Uterus (tissue), 4 donors: ENCODE measurements at regions of chr2 and their contacts with region 1.

Region 1: GRCh38 chr2:24971536-24972314 is at the start of gene DNAJC27:
- DNase-seq: peak; percentile 97 to 99
- H3K4me3 ChIP-seq: peak within 1 kb of the TSS; percentile 57 to 98
- H3K27ac ChIP-seq: peak within 1 kb of the TSS; percentile 98 to 99
- H3K4me1 ChIP-seq: no peaks in the 10 kb centered on the region
- H3K27me3 ChIP-seq: no peaks in the 10 kb centered on the region
- CTCF ChIP-seq: peak in 1 of 4 experiments; percentile 46
- POLR2A ChIP-seq: peak; percentile 96 to 98
- total RNA-seq, gene DNAJC27: 3.1 to 15.3 (median 7.8) TPM

Region 2: DNA sequence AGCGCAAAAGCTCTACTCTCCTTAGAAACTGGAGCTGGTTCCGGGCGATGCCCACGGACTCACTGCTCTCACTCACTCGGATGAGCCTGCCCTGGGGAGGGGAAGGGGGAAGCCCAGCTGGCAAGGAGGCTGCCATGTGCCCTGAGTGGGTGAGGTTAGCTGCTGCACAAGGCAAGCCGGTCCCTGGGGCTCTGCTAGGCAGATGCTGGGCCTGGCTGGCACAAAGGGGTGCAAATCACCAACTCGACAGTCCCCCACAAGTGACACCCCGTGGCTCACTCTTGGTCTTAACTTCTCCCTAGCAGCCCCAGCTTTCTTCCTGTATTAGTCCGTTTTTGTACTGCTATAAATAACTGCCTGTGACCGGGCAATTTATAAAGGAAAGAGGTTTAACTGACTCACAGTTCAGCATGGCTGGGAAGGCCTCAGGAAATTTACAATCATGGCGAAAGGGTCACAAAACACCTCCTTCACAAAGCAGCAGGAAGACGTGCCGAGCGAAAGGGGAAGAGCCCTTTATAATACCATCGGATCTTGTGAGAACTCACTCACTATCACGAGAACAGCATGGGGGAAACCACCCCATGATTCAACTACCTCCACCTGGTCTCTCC is 84.9 kb before region 1 on chr2:
- intact Hi-C with region 1: no loop called
- DNase-seq: no peak
- H3K4me3 ChIP-seq: no peak overlapping the region
- H3K27ac ChIP-seq: peak overlapping the region; percentile 53 to 57
- H3K4me1 ChIP-seq: no peaks in the 10 kb centered on the region
- H3K27me3 ChIP-seq: no peaks in the 10 kb centered on the region
- CTCF ChIP-seq: no peak
- POLR2A ChIP-seq: no peak

Region 3: DNA sequence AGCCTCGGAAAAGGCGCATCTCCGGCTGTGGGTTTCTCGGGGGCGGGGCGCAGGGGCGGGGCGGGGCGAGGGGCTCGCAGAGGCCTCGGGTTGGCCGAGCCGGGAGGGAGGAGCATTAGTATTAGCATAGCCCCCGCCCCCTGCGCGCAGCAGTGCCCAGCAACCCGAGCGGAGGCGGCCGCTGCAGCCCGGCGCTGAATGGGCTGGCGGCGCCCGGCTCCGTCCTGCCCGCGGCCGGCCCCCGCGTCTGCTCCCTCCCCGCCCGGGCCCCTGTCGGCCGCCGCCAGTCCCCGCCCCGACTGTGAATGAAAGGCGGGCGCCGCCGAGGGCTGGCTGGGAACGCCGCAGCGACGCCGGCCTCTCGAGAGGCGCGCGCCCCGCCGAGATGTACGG is 70.2 kb after region 1 on chr2 and contains the start of gene EFR3B:
- intact Hi-C with region 1: loop called (anchors 10 kb)
- DNase-seq: peak; percentile 94 to 95
- H3K4me3 ChIP-seq: peak within 1 kb of the TSS; percentile 46 to 71
- H3K27ac ChIP-seq: peak within 1 kb of the TSS; percentile 43 to 68
- H3K4me1 ChIP-seq: peaks cover 0 to 5% of the 10 kb centered on the region in 2 donors
- H3K27me3 ChIP-seq: no peaks in the 10 kb centered on the region
- CTCF ChIP-seq: no peak
- POLR2A ChIP-seq: peak; percentile 41 to 49
- total RNA-seq, gene EFR3B: under 0.01 to 6.1 (median 1.3) TPM in 3 of 4 donors, not detected in the other

Region 4: GRCh38 chr2:25088817-25089516 is 117.2 kb after region 1 on chr2:
- intact Hi-C with region 1: no loop called
- DNase-seq: no peak
- H3K4me3 ChIP-seq: no peak overlapping the region
- H3K27ac ChIP-seq: no peak overlapping the region
- H3K4me1 ChIP-seq: no peaks in the 10 kb centered on the region
- H3K27me3 ChIP-seq: no peaks in the 10 kb centered on the region
- CTCF ChIP-seq: no peak
- POLR2A ChIP-seq: no peak